H1 (cell line): ENCODE measurements at regions of chr17 and their contacts with region 1.

Region 1: GRCh38 chr17:10844621-10845387 is 6.9 kb upstream of the PIRT start:
- DNase-seq: peak; percentile 46 to 81
- H3K4me3 ChIP-seq: peak overlapping the region; percentile 32 to 69 (median 57)
- H3K27ac ChIP-seq: no peak overlapping the region
- H3K4me1 ChIP-seq: peaks cover 7 to 10% (median 7%) of the 10 kb centered on the region in 4 experiments; a peak in 6 of 7 replicates
- H3K27me3 ChIP-seq: peaks cover 0 to 2% (median 0%) of the 10 kb centered on the region in 4 experiments; a peak in 1 of 7 replicates
- CTCF ChIP-seq: peak; percentile 89 to 95 (median 91)
- EP300 ChIP-seq: no peak
- POLR2A ChIP-seq: no peak
- RAD21 ChIP-seq: peak; percentile 91 to 92

Region 2: DNA sequence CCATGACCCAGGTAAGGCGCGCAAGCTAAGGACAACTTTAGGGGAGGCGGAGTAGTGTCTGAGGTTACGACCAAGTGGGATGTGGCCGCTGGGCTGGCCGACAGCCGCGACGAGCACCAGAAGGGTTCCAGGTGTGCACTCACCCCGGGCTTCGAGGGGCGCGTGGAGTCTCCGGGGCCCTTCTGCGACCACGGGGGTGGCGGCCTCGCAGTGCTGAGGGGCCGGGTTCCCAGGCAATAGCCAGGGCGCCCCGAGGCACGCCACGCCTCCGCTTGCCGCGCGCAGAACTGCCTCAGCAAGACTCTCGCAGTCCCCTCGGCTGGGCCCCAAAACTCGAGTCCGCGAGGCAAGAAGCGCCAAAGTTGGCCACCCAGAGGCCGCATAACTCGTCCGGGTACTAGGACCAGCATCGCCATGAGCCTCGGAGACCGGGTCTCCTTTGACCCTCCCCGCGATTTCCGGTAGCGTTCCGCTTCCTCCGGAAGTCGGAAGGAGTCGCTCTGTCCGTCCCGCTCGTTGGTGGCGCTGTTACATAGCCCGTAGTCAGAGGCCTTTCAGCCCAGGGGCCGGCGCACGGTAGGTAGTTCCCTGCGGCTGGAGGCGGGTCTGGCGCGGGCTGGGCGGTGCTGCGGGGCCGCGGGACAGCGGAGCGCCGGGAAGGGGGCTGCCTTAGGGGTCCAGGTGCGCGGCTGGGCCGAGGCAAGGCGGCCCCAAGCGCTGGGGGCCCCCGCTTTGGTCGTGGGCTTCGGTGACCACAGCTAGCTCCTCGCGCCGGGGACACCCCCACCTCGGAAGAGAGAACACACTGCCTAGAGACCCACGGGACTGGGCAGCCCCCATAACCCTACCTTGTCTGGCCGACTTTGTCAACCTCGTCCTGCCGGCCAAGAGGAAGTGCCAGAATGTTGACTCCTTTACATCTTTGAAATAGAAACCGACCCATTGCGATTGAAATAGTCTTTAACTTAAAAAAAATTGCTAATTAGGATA is 147.4 kb before region 1 on chr17 and contains the starts of genes ADPRM and SCO1:
- CTCF ChIA-PET with region 1: no interaction called
- POLR2A ChIA-PET with region 1: no interaction called
- DNase-seq: peak; percentile 81 to 90
- H3K4me3 ChIP-seq: peak within 1 kb of the TSS; percentile 76 to 97 (median 84)
- H3K27ac ChIP-seq: peak within 1 kb of the TSS; percentile 85
- H3K4me1 ChIP-seq: no peaks in the 10 kb centered on the region
- H3K27me3 ChIP-seq: no peaks in the 10 kb centered on the region
- CTCF ChIP-seq: peak; percentile 21 to 62 (median 30)
- EP300 ChIP-seq: no peak
- POLR2A ChIP-seq: peak in 1 of 2 experiments; percentile 97; a peak in 2 of 3 replicates
- RAD21 ChIP-seq: peak in 1 of 2 experiments; percentile 22; a peak in 2 of 4 replicates
- total RNA-seq, gene ADPRM: 6.0 and 6.7 TPM in 2 replicates
- total RNA-seq, gene SCO1: 60.3 and 61.8 TPM in 2 replicates

Region 3: GRCh38 chr17:10748531-10749163 is 96.2 kb before region 1 on chr17:
- CTCF ChIA-PET with region 1: interaction called, 29 read pairs
- POLR2A ChIA-PET with region 1: no interaction called
- DNase-seq: no peak
- H3K4me3 ChIP-seq: no peak overlapping the region
- H3K27ac ChIP-seq: no peak overlapping the region
- H3K4me1 ChIP-seq: peaks cover 0 to 5% (median 2%) of the 10 kb centered on the region in 4 experiments; a peak in 3 of 7 replicates
- H3K27me3 ChIP-seq: no peaks in the 10 kb centered on the region
- CTCF ChIP-seq: no peak
- EP300 ChIP-seq: no peak
- POLR2A ChIP-seq: no peak
- RAD21 ChIP-seq: no peak

Region 4: GRCh38 chr17:10754109-10754508 is 90.7 kb before region 1 on chr17:
- CTCF ChIA-PET with region 1: interaction called, 29 read pairs
- POLR2A ChIA-PET with region 1: no interaction called
- DNase-seq: peak in 1 of 2 experiments; percentile 78
- H3K4me3 ChIP-seq: peak overlapping the region in 1 of 4 experiments; percentile 57; a peak in 2 of 8 replicates
- H3K27ac ChIP-seq: no peak overlapping the region
- H3K4me1 ChIP-seq: peaks cover 9 to 20% (median 14%) of the 10 kb centered on the region in 4 experiments
- H3K27me3 ChIP-seq: no peaks in the 10 kb centered on the region
- CTCF ChIP-seq: peak; percentile 68 to 90 (median 77)
- EP300 ChIP-seq: no peak
- POLR2A ChIP-seq: no peak
- RAD21 ChIP-seq: peak; percentile 59 to 69

Region 5: DNA sequence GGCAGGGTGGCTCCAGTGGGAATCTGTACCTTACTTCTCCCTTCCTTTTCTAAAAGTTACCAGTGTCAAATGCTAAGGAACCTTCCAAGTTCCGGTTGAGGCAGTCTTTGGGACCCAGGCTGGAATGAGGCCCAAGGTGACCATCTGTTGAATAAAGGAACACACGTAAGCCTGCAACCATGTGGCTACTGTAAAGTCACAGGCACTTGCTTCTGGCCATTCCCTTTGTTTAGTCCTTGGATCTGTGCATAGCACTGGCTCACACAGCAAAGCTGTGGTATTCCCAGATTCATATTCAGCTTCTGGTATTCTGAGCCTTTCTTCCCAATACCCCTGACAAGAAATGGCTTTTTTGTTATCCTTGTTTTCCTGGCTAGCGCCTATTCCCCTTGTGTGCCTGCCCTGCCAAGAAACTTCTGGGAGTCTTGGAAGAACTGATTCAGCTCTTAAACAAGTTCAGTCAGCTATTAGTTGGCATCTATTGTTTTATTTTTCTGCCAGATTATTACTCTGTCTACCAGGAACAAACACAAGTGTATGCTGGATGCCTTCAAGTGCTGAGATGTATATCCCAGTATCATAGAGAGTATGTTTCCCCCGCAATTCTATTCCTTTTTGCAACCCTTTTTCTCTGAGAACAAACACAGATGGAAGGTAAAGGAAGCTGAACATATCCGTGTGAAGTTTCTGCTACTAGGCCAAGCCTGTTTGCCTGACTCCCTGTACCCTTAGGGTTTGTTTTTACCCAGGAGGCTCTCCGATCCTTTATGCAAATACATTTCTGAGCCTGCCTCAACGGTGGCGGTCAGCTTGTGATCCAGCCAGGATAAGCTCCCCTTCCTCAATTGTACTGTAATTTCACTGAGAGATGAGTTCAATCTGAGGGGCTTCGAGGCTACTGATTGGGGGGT is 54.1 kb before region 1 on chr17:
- CTCF ChIA-PET with region 1: interaction called, 3 read pairs
- POLR2A ChIA-PET with region 1: interaction called, 10 read pairs
- DNase-seq: no peak
- H3K4me3 ChIP-seq: no peak overlapping the region
- H3K27ac ChIP-seq: no peak overlapping the region
- H3K4me1 ChIP-seq: peaks cover 4 to 13% (median 5%) of the 10 kb centered on the region in 4 experiments; a peak in 4 of 7 replicates
- H3K27me3 ChIP-seq: no peaks in the 10 kb centered on the region; a peak in 1 of 7 replicates
- CTCF ChIP-seq: no peak
- EP300 ChIP-seq: no peak
- POLR2A ChIP-seq: peak; percentile 63 to 90
- RAD21 ChIP-seq: no peak

Region 6: GRCh38 chr17:10827898-10828552 is 16.8 kb before region 1 on chr17:
- CTCF ChIA-PET with region 1: interaction called, 10 read pairs
- POLR2A ChIA-PET with region 1: interaction called, 4 read pairs
- DNase-seq: no peak
- H3K4me3 ChIP-seq: no peak overlapping the region
- H3K27ac ChIP-seq: no peak overlapping the region
- H3K4me1 ChIP-seq: peaks cover 3 to 13% (median 4%) of the 10 kb centered on the region in 4 experiments; a peak in 5 of 7 replicates
- H3K27me3 ChIP-seq: peaks cover 0 to 2% (median 0%) of the 10 kb centered on the region in 4 experiments; a peak in 1 of 7 replicates
- CTCF ChIP-seq: no peak
- EP300 ChIP-seq: no peak
- POLR2A ChIP-seq: no peak
- RAD21 ChIP-seq: no peak

Region 7: DNA sequence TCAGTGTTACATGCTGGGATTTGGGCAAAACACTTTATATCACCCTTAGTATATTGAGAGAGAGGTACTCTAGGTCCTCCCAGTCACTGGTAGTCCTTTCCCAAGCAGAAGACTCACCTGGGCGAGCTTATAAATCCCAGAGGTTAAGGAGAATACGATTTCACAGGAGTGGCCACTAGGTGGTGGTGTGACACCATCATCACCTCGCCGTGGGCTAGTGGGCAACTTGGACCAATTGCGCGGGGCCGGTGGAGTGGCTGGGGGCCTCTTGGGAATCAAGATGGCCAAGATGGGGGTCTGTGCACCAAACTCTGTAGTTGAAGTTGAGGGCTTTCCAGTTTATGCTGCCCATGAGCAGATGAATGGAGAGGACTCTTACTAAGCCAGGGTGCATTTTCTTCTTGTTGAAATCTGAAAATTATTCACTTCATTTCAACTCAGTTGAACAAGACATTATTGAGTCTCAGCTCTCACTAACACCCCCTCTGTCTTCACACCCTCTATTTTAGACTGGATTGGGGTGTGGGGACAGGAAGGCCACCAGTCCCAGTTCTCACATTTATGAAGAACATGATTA is 31.3 kb after region 1 on chr17:
- CTCF ChIA-PET with region 1: interaction called, 20 read pairs
- POLR2A ChIA-PET with region 1: no interaction called
- DNase-seq: peak in 1 of 2 experiments; percentile 88
- H3K4me3 ChIP-seq: no peak overlapping the region
- H3K27ac ChIP-seq: no peak overlapping the region
- H3K4me1 ChIP-seq: no peaks in the 10 kb centered on the region
- H3K27me3 ChIP-seq: no peaks in the 10 kb centered on the region
- CTCF ChIP-seq: peak; percentile 74 to 83 (median 75)
- EP300 ChIP-seq: no peak
- POLR2A ChIP-seq: no peak
- RAD21 ChIP-seq: peak; percentile 91 to 96